Activated CD8-positive, alpha-beta T cell treated with anti-CD3 and anti-CD28 coated beads for 36 hours (primary cell): ENCODE measurements at regions of chr4 and their contacts with region 1.

Region 1: DNA sequence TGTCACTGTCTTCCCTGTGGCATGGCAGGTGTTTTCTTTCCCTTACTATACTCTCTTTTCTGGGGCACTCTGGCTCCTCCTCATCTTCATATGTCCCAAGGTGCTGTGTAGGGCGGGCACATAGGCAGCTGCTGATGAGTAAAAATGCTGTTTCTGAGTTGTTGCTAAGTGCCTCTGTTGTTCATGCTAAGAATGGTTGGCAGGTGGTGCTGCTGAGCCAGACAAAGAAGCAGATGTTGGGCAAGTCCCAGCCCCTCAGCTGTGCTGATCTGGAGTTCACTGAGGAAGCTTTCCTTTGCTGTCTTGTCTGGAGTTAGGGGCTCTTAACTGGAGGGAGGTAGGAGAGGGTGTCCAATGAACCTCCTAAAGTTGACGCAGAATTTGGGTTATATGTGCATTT is 40.6 kb downstream of the HADH start:
- DNase-seq: peak; percentile 89
- ATAC-seq: peak; percentile 83
- H3K4me3 Mint-ChIP-seq: peak overlapping the region; percentile 45
- H3K27ac Mint-ChIP-seq: peak overlapping the region; percentile 97
- H3K4me1 Mint-ChIP-seq: peaks cover 69% of the 10 kb centered on the region
- H3K27me3 Mint-ChIP-seq: no peaks in the 10 kb centered on the region
- CTCF ChIP-seq: peak; percentile 72

Region 2: DNA sequence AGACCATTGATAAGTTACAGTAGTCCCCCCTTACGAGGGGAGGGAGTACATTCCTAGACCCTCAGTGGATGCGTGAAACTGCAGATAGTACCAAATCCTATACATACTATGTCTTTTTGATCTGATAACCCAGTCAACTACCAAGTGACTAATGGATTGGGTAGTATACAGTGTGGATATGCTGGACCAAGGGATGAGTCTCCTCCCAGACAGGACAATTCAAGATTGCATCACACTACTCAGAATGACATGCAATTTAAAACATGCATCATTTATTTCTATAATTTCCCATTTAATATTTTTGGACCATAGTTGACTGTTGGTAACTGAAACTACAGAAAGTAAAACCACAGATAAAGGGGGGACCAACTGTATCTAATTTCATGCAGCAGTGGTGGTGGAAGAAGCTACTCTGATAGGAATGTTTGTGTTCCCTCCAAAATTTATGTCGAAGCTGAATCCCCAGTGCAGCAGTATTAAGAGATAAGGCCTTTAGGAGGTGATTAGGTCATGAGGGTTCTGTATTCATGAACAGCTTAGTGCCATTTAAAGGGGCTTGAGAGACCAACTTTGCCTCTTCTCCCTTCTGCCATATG is 28.7 kb before region 1 on chr4:
- CTCF ChIA-PET with region 1: no interaction called
- POLR2A ChIA-PET with region 1: no interaction called
- intact Hi-C with region 1: no loop called
- DNase-seq: no peak
- ATAC-seq: no peak
- H3K4me3 Mint-ChIP-seq: no peak overlapping the region
- H3K27ac Mint-ChIP-seq: no peak overlapping the region
- H3K4me1 Mint-ChIP-seq: peaks cover 40% of the 10 kb centered on the region
- H3K27me3 Mint-ChIP-seq: no peaks in the 10 kb centered on the region
- CTCF ChIP-seq: no peak

Region 3: DNA sequence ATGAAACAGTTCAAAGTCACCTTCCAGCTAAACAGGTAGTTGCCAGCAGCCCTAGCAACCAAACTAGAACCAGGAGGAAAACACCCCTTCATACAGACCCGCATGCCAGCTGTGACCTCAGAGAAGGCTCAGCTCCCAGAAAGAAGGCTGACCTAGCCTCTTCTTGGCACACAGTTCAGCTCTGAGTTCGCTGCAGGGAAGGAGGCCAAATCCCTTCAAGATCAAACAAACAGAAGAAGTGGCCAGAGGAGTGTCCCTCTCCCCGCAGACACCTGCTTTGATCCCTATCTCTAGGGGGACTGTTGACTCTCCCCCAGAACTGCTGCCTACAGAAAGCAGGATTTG is 15.3 kb after region 1 on chr4:
- CTCF ChIA-PET with region 1: interaction called, 18 read pairs
- POLR2A ChIA-PET with region 1: interaction called, 13 read pairs
- intact Hi-C with region 1: no loop called
- DNase-seq: peak; percentile 45
- ATAC-seq: peak; percentile 56
- H3K4me3 Mint-ChIP-seq: no peak overlapping the region
- H3K27ac Mint-ChIP-seq: peak overlapping the region; percentile 72
- H3K4me1 Mint-ChIP-seq: peaks cover 60% of the 10 kb centered on the region
- H3K27me3 Mint-ChIP-seq: no peaks in the 10 kb centered on the region
- CTCF ChIP-seq: no peak

Region 4: GRCh38 chr4:108060164-108060563 is 29.8 kb after region 1 on chr4:
- CTCF ChIA-PET with region 1: interaction called, 16 read pairs
- POLR2A ChIA-PET with region 1: interaction called, 5 read pairs
- intact Hi-C with region 1: no loop called
- DNase-seq: no peak
- ATAC-seq: peak; percentile 19
- H3K4me3 Mint-ChIP-seq: no peak overlapping the region
- H3K27ac Mint-ChIP-seq: peak overlapping the region; percentile 62
- H3K4me1 Mint-ChIP-seq: peaks cover 74% of the 10 kb centered on the region
- H3K27me3 Mint-ChIP-seq: no peaks in the 10 kb centered on the region
- CTCF ChIP-seq: peak; percentile 26

Region 5: DNA sequence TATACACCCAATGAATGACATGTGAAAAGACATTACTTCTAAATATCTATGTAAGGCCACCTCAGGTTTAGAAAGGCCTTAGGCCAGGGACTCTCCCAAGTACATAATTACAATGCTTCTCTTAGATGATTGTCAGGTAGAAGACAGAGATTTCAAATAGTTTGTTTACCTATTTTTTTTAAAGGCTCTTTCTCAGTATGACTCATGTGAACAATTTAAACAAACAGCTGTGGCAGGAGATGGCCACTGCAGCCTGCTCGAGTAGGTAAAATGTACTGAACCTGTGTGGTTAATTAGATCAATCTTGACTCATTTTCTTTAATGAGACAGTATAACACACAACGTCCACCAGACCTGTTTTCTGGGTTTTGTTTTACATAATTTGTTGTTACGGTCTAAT is 88.2 kb after region 1 on chr4:
- CTCF ChIA-PET with region 1: interaction called, 14 read pairs
- POLR2A ChIA-PET with region 1: interaction called, 10 read pairs
- intact Hi-C with region 1: no loop called
- DNase-seq: peak; percentile 63
- ATAC-seq: peak; percentile 9
- H3K4me3 Mint-ChIP-seq: peak overlapping the region; percentile 28
- H3K27ac Mint-ChIP-seq: peak overlapping the region; percentile 89
- H3K4me1 Mint-ChIP-seq: peaks cover 86% of the 10 kb centered on the region
- H3K27me3 Mint-ChIP-seq: no peaks in the 10 kb centered on the region
- CTCF ChIP-seq: no peak

Region 6: GRCh38 chr4:108160741-108161352 is 130.5 kb after region 1 on chr4:
- CTCF ChIA-PET with region 1: interaction called, 33 read pairs
- POLR2A ChIA-PET with region 1: interaction called, 19 read pairs
- intact Hi-C with region 1: no loop called
- DNase-seq: peak; percentile 19
- ATAC-seq: peak; percentile 50
- H3K4me3 Mint-ChIP-seq: peak overlapping the region; percentile 87
- H3K27ac Mint-ChIP-seq: peak overlapping the region; percentile 77
- H3K4me1 Mint-ChIP-seq: peaks cover 55% of the 10 kb centered on the region
- H3K27me3 Mint-ChIP-seq: no peaks in the 10 kb centered on the region
- CTCF ChIP-seq: no peak

Region 7: GRCh38 chr4:108181704-108182103 is 151.4 kb after region 1 on chr4:
- CTCF ChIA-PET with region 1: interaction called, 11 read pairs
- POLR2A ChIA-PET with region 1: no interaction called
- intact Hi-C with region 1: no loop called
- DNase-seq: peak; percentile 26
- ATAC-seq: no peak
- H3K4me3 Mint-ChIP-seq: no peak overlapping the region
- H3K27ac Mint-ChIP-seq: no peak overlapping the region
- H3K4me1 Mint-ChIP-seq: peaks cover 5% of the 10 kb centered on the region
- H3K27me3 Mint-ChIP-seq: no peaks in the 10 kb centered on the region
- CTCF ChIP-seq: no peak

Region 8: GRCh38 chr4:108570993-108571569 is 540.7 kb after region 1 on chr4:
- CTCF ChIA-PET with region 1: interaction called, 21 read pairs
- POLR2A ChIA-PET with region 1: interaction called, 6 read pairs
- intact Hi-C with region 1: loop called (anchors 5 kb)
- DNase-seq: no peak
- ATAC-seq: no peak
- H3K4me3 Mint-ChIP-seq: no peak overlapping the region
- H3K27ac Mint-ChIP-seq: no peak overlapping the region
- H3K4me1 Mint-ChIP-seq: peaks cover 33% of the 10 kb centered on the region
- H3K27me3 Mint-ChIP-seq: peaks cover 2% of the 10 kb centered on the region
- CTCF ChIP-seq: no peak